Body of pancreas (tissue), 4 donors: ENCODE measurements at regions of chr16 and their contacts with region 1.

Region 1: GRCh38 chr16:76653390-76654026 is 376.3 kb downstream of the CNTNAP4 start:
- DNase-seq: peak in 3 of 4 donors; percentile 13 to 25 (median 15)
- ATAC-seq: no peak
- H3K4me3 ChIP-seq: no peak overlapping the region
- H3K27ac ChIP-seq: no peak overlapping the region
- H3K4me1 ChIP-seq: no peaks in the 10 kb centered on the region
- H3K27me3 ChIP-seq: no peaks in the 10 kb centered on the region
- CTCF ChIP-seq: peak; percentile 23 to 63 (median 49)
- POLR2A ChIP-seq: no peak

Region 2: GRCh38 chr16:75794426-75794825 is 859.1 kb before region 1 on chr16:
- intact Hi-C with region 1: loop called (anchors 10 kb)
- DNase-seq: no peak
- ATAC-seq: no peak
- H3K4me3 ChIP-seq: no peak overlapping the region
- H3K27ac ChIP-seq: no peak overlapping the region
- H3K4me1 ChIP-seq: no peaks in the 10 kb centered on the region
- H3K27me3 ChIP-seq: no peaks in the 10 kb centered on the region
- CTCF ChIP-seq: no peak
- POLR2A ChIP-seq: no peak

Region 3: GRCh38 chr16:76598498-76598897 is 55.0 kb before region 1 on chr16:
- intact Hi-C with region 1: no loop called
- DNase-seq: no peak
- ATAC-seq: no peak
- H3K4me3 ChIP-seq: no peak overlapping the region
- H3K27ac ChIP-seq: no peak overlapping the region
- H3K4me1 ChIP-seq: no peaks in the 10 kb centered on the region
- H3K27me3 ChIP-seq: no peaks in the 10 kb centered on the region
- CTCF ChIP-seq: no peak
- POLR2A ChIP-seq: no peak